WTC11 (cell line): ENCODE measurements at regions of chr17 and their contacts with region 1.

Region 1: DNA sequence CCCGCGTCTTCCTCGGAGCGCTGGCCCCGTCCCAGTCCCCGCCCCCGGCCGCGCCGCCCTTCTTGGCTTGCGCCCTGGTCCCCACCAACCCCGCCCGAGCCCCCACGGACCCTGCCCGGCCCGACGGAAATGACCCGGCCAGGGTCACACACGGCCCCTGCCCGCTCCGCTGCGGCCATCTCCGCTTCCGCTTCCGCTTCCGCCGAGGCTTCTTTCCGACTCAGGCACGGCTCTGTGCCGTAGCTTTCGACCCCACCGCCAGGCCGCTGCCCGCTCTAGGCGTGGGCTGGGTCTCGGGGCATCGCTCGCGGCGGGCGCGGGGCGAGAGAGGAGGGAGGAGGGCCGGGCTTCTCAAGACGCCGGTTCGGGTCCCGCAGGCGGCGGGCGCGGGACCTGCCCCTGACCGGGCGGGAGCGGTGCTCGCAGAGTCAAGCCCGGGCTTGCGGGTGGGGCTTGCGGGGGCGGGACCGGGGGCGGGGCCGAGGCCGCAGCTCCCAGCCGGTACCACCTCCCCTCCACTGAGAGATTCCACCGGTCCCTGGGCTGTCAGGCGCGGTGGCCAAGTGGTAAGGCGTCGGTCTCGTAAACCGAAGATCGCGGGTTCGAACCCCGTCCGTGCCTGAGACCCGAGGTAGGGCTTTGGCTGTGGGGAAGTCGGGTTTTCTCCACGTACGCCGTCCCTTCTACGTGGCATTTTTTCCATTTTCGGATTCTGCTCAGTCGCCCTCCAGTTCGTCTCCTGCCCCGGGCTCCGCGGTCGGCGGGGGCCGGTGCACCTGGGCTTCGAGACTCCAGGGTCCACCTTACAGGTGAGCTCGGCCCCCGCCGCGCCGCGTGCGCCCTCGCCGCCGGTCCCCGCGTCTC is 158.3 kb downstream of the RAB11FIP4 start:
- DNase-seq: peak; percentile 89
- ATAC-seq: peak; percentile 74
- H3K4me3 Mint-ChIP-seq: peak overlapping the region; percentile 88
- H3K27ac Mint-ChIP-seq: no peak overlapping the region
- H3K4me1 Mint-ChIP-seq: peaks cover 7% of the 10 kb centered on the region
- H3K27me3 Mint-ChIP-seq: peaks cover 12% of the 10 kb centered on the region
- CTCF ChIP-seq: no peak

Region 2: GRCh38 chr17:31533546-31534155 is 16.1 kb before region 1 on chr17:
- CTCF ChIA-PET with region 1: interaction called, 11 read pairs
- POLR2A ChIA-PET with region 1: no interaction called
- DNase-seq: peak; percentile 72
- ATAC-seq: peak; percentile 74
- H3K4me3 Mint-ChIP-seq: no peak overlapping the region
- H3K27ac Mint-ChIP-seq: no peak overlapping the region
- H3K4me1 Mint-ChIP-seq: peaks cover 3% of the 10 kb centered on the region; the same call in 1 of the 2 replicates
- H3K27me3 Mint-ChIP-seq: no peaks in the 10 kb centered on the region
- CTCF ChIP-seq: 0 out of 2 replicates have a peak, but pooled peaks have one; percentile 36